ENCODE measurements at regions of chr4 and their contacts with region 1.

Region 1: GRCh38 chr4:168514249-168514852 is 17.5 kb downstream of the PALLD start:
- DNase-seq: no peak
- H3K4me3 Mint-ChIP-seq: no peak overlapping the region
- H3K27ac Mint-ChIP-seq: no peak overlapping the region
- H3K4me1 Mint-ChIP-seq: no peaks in the 10 kb centered on the region
- H3K27me3 Mint-ChIP-seq: no peaks in the 10 kb centered on the region
- CTCF ChIP-seq: peak; percentile 20

Region 2: DNA sequence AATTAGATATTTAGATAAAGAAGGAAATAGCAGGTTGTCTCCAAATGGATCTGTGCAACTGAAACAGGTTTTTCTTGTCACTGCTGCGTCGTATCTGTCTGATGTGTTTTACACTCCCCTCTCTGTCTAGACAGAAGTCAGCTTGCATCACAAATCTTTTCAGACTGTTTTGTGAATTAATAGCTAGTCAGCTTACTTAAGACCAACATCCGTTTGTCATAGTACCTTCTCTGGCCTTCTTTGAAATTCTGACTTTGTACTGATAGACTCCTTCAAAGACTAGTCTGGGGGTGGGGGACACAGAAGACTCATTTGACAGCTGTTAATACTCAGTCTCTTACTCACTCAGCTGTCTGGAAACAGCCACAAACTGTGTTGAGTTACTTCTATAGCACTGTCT is 180.3 kb after region 1 on chr4:
- CTCF ChIA-PET with region 1: no interaction called
- intact Hi-C with region 1: loop called (anchors 10 kb)
- DNase-seq: no peak
- H3K4me3 Mint-ChIP-seq: no peak overlapping the region
- H3K27ac Mint-ChIP-seq: no peak overlapping the region
- H3K4me1 Mint-ChIP-seq: peaks cover 11% of the 10 kb centered on the region
- H3K27me3 Mint-ChIP-seq: no peaks in the 10 kb centered on the region
- CTCF ChIP-seq: no peak

Region 3: DNA sequence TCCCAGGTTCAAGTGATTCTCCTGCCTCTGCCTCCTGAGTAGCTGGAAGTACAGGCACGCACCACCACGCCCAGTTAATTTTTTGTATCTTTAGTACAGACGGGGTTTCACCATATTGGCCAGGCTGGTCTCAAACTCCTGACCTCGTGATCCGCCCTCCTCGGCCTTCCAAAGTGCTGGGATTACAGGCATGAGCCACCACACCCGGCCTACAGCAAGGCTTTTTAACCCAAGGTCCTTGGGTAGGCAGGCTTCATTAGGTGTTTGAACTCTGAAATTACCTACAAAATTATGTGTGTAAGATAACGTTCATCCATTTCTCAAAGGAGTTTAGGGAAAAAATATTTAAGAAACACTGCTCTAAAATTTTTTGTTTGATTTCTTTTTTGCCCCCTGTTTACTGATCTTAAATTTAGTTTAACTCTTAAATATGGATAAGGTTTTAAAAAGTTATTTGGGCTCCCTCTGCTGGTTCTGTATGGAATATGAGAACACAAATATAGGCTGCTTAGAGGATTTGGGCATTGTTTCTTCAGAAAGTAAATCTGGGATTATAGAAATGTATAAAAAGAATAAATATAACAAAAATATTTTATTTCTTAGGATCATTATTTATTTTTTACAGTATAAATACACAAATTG is 402.9 kb after region 1 on chr4:
- CTCF ChIA-PET with region 1: interaction called, 5 read pairs
- intact Hi-C with region 1: loop called (anchors 5 kb)
- DNase-seq: no peak
- H3K4me3 Mint-ChIP-seq: no peak overlapping the region
- H3K27ac Mint-ChIP-seq: no peak overlapping the region
- H3K4me1 Mint-ChIP-seq: no peaks in the 10 kb centered on the region
- H3K27me3 Mint-ChIP-seq: no peaks in the 10 kb centered on the region
- CTCF ChIP-seq: no peak